ENCODE measurements at regions of chr1 and their contacts with region 1.

Region 1: GRCh38 chr1:86499987-86500593 is 31.4 kb downstream of the CLCA1 start:
- DNase-seq: no peak
- ATAC-seq: no peak

Region 2: DNA sequence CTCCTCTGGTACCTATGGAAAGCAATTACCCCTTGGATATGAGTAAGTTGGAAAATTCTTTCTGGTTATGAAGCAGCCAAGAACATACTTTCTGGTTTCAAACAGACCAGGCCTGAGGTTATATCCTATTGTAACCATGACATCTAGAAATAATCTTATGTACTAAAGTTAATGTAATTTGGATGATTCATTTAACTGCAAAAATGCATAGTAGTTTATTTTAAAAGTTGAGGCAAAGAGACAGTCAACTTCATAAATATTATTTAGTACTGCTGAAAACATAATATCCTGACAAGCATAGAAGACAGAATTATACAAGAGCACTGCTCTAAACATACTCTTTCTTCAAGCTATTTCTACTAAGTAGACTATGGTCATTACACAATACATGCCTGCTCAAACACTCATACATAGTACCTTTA is 129.5 kb before region 1 on chr1:
- intact Hi-C with region 1: loop called (anchors 10 kb)
- DNase-seq: no peak
- ATAC-seq: no peak

Region 3: DNA sequence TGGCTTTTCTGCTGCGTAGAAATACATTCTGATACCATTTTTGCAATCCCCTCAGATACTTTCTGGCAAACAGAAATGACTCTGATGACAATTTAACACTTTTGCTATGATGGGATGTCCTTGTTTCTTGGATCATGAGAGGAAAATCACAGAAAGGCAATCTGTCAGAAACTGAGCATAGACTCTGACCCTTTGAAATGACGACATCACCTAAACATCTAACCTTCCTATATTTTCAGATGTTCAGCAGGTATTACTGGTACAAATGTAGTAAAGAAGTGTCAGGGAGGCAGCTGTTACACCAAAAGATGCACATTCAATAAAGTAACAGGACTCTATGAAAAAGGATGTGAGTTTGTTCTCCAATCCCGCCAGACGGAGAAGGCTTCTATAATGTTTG is 18.1 kb before region 1 on chr1:
- intact Hi-C with region 1: no loop called
- DNase-seq: no peak
- ATAC-seq: no peak

Region 4: DNA sequence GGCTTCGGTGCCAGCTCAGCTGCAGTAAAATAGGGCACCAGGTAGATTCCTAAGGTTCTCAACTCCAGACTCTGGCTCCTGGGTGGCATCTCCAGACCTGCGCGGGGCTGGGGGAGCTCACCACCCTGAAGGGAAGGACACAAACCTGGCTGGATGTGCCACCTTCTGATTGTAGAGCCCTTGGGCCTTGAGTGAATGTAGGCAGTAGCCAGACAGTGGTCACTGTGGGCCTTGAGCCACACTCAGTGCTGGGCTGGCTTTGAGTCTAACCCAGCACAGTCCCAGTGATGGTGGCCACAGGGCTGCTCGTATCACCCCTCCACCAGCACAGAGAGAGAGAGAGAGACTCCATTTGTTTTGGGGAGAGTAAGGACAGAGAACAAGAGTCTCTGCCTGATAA is 166.3 kb after region 1 on chr1:
- intact Hi-C with region 1: no loop called
- DNase-seq: no peak
- ATAC-seq: no peak

Measured in Right ventricle myocardium superior (tissue), 1 donor.